GM10248 (cell line): ENCODE measurements at regions of chr1 and their contacts with region 1.

Region 1: GRCh38 chr1:53196485-53197270 is at the start of gene CPT2:
- DNase-seq: peak; percentile 99
- CTCF ChIP-seq: no peak

Region 2: DNA sequence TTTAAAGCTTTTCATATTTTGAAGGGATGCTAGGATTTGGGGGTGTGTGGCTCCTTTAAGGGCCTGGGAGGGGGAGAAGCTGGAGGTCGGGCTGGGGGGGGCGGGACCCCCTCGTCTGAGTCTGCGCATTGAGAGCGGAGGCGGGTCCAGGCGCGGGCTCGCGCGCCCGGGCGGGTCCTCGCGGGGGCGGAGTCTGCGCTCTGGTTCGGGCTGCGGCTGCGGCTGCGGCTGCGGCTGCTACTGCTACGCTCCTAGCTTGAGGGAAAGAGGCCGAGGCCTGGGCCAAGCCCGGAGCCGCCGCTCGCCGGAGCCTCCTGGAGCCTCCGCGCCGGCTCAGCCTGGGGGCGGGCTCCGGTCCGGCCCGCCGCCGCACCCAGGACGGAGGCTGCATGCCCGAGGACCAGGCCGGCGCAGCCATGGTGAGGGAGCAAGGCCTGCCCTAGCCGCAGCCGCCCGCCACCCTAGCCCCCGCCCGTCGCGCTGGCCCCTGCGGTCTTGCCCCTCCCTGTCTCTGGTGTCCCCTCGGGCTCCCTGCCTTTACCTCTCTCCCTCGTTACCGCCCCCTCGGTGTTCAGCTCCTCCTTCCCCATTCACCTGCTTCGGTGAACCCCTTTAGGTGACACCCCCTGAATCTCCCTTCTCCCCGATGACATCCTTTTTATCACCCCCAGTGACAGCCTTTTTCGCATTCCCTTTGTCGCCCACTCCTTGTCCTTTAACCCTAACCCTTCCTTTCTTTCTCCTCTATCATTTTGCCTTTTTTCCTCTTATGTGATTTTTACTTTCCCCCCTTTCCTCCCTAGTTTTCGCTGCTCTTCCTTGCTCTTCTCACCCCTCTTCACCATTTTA is 470.2 kb before region 1 on chr1 and contains the start of gene ZYG11B:
- CTCF ChIA-PET with region 1: no interaction called
- POLR2A ChIA-PET with region 1: no interaction called
- DNase-seq: peak; percentile 98
- CTCF ChIP-seq: no peak

Region 3: GRCh38 chr1:53165408-53165961 is 31.2 kb before region 1 on chr1:
- CTCF ChIA-PET with region 1: no interaction called
- POLR2A ChIA-PET with region 1: no interaction called
- DNase-seq: no peak
- CTCF ChIP-seq: no peak

Region 4: DNA sequence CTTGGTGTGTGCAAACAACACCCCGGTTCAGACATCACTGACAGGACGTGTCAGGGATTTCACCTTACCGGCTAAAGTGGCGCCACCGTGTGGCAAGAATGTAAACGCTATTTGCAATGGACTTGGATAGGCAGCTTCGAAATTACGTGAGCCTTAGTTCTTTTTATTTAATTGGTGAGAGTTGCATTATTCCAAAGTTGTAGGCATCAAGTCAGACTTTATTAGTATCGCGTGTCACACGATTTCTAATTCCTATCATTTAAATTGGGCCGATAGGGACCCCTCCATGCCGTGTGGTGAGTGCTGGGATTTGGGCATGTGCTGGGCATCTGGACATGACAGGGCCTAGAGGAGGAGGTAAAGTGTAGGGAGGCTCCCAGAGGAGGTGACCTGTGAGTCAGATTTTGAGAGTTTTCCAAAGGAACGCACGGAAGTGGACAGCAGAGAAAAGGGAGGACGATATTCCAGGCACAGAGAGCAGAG is 14.5 kb before region 1 on chr1:
- CTCF ChIA-PET with region 1: interaction called, 124 read pairs
- POLR2A ChIA-PET with region 1: no interaction called
- DNase-seq: peak; percentile 78
- CTCF ChIP-seq: peak; percentile 90

Region 5: DNA sequence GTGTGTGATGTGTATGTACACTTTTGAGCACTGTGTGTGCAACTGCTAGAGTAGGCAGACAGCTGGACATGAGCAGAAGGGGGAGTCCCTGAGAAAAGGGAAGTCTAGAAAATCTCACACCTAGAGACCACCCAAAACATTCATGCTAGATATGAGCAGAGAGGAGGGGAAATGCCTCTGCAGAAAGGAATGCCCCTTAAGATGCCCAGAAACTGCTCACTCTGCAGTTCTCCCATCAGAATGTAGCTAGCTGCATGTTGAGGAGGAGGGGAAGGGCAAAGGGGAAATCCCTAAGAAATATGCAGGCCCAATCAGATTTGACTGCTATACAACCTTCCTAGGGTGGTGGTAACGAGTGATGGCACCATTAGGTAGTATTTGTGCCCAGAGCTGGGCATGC is 73.4 kb after region 1 on chr1:
- CTCF ChIA-PET with region 1: no interaction called
- POLR2A ChIA-PET with region 1: no interaction called
- DNase-seq: no peak
- CTCF ChIP-seq: no peak

Region 6: GRCh38 chr1:53462769-53463501 is 266.3 kb after region 1 on chr1:
- CTCF ChIA-PET with region 1: no interaction called
- POLR2A ChIA-PET with region 1: no interaction called
- DNase-seq: peak; percentile 7
- CTCF ChIP-seq: no peak